BJ (cell line): ENCODE measurements at regions of chr11 and their contacts with region 1.

Region 1: GRCh38 chr11:77619576-77620198 is 17.9 kb downstream of the CLNS1A start:
- DNase-seq: no peak
- H3K4me3 ChIP-seq: no peak overlapping the region
- H3K27me3 ChIP-seq: no peaks in the 10 kb centered on the region
- CTCF ChIP-seq: peak; percentile 75

Region 2: DNA sequence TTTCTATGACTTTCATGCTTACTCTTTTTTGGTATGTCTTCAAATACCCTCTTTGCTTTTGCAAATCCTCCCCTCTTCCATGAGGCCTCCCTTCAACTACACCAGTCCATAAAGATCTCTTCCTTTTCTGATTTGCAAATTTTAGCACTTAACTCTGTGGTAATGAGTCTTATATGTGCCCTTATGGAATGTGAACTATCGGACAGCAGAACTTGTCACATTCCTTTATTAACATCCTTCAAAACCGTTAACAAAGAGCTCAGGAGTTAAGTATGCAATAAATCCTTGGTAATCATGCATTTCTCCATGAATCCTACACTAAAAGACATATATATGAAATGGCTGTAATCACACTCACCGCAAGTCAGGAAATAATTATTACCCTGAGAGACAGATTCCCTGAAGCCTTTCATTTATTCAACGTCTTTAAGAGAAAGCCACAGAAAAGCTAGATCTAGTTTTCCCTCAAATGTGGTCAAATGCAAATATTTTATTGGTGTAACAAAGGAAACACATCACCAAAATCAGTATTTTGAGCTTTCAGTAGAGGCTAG is 10.5 kb after region 1 on chr11:
- CTCF ChIA-PET with region 1: interaction called, 11 read pairs
- POLR2A ChIA-PET with region 1: no interaction called
- DNase-seq: no peak
- H3K4me3 ChIP-seq: no peak overlapping the region
- H3K27me3 ChIP-seq: no peaks in the 10 kb centered on the region
- CTCF ChIP-seq: no peak

Region 3: DNA sequence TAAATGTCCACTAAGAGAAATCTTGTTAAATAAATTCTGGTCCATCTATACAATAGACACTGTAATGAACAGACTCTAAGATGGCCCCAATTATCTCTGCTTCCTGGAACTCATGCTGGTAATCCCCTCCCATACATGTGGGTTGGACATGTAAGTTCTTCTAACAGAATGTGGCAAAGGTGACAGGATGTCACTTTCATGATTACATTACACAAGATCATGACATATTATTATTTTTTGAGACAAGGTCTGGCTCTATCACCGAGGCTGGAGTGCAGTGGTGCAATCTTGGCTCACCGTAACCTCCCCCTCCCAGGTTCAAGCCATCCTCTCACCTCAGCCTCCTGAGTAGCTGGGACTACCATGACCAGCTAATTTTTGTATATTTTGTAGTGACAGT is 474.6 kb after region 1 on chr11:
- CTCF ChIA-PET with region 1: no interaction called
- POLR2A ChIA-PET with region 1: no interaction called
- DNase-seq: no peak
- H3K4me3 ChIP-seq: no peak overlapping the region
- H3K27me3 ChIP-seq: no peaks in the 10 kb centered on the region
- CTCF ChIP-seq: no peak